ENCODE measurements at regions of chr12 and their contacts with region 1.

Region 1: GRCh38 chr12:46364777-46365580 is 7.6 kb downstream of the SLC38A2 start:
- DNase-seq: no peak
- H3K4me3 ChIP-seq: peak overlapping the region; percentile 21
- CTCF ChIP-seq: no peak

Region 2: DNA sequence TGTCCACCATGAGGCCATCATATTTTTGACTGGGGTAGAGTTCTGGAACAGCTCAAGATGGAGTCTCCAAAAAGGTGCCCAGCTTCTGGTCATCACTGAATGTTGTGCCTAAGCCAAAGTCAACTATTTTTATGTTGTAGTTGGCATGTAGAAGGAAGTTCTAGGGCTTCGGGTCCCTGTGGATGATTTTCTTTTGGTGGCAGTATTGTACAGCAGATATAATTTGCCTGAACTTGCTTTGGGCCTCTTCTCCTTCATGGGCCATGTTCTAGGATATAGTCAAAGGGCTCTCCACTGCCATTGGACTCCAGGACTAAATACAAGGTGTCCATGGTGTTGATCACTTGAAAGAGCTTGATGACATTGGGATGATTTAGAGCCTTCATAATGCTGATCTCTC is 317.2 kb after region 1 on chr12:
- in situ Hi-C with region 1: loop called (anchors 5 kb)
- DNase-seq: no peak
- H3K4me3 ChIP-seq: no peak overlapping the region
- CTCF ChIP-seq: no peak

Region 3: DNA sequence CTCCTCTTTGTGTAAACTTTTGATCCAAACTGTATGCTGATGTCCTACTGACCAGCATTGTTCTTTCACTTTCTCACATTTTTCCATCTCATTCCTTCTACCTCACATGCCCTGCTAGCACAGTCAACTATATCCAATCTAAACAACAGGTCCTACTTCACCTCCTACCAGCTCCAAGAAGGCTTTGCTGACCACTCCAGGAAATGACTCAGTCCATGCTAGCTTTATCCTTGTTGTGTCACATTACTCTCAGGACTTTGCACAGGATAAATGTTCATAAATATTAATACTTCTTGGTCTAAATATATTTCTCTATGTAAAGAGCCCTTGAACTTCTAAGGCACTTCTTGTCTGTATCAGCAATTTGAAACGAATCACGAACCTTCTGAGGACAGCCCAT is 649.5 kb after region 1 on chr12:
- in situ Hi-C with region 1: loop called (anchors 5 kb)
- DNase-seq: peak; percentile 84
- H3K4me3 ChIP-seq: no peak overlapping the region
- CTCF ChIP-seq: no peak

Measured in astrocyte of the cerebellum (primary cell).